ENCODE measurements at regions of chr1 and their contacts with region 1.

Region 1: GRCh38 chr1:210400043-210400840 is 71.5 kb downstream of the HHAT start:
- DNase-seq: peak in 4 of 5 donors; percentile 30 to 64 (median 48)
- ATAC-seq: peak; percentile 88 to 94 (median 91)
- H3K4me3 ChIP-seq: no peak overlapping the region
- H3K27ac ChIP-seq: no peak overlapping the region
- H3K4me1 ChIP-seq: peaks cover 0 to 11% (median 0%) of the 10 kb centered on the region in 12 donors
- H3K27me3 ChIP-seq: no peaks in the 10 kb centered on the region
- CTCF ChIP-seq: peak; percentile 68 to 90 (median 78)
- POLR2A ChIP-seq: no peak

Region 2: DNA sequence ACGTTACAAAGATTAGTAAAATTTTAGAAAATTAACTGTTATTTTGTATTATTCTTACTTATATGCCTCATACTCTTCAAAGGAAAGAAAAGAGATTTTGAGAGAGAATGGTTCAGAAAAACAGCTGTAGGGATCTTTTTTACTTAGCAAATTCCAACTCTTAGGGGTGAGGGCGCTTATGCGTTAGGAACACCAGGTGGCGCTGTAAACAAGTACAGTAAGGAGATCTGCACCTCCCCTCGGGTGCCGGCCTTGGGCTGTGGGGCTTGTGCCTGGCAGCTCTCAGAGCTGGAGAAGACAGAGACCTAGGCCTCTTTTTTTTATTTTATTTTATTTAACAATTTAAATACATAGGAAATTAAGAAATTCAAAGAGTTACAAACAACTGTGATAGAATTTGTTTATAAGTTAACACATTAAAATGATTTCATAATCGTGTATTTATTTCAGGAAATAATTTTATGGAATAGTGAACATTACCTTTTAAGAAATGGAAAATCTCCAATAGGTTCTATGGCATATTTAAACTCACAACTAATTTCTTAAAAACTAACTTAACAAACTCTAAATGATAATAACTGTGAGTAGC is 539.9 kb before region 1 on chr1:
- intact Hi-C with region 1: loop called in 1 of 10 experiments (anchors 10 kb)
- DNase-seq: peak; percentile 56 to 82 (median 73)
- ATAC-seq: peak; percentile 47 to 84 (median 76)
- H3K4me3 ChIP-seq: no peak overlapping the region
- H3K27ac ChIP-seq: no peak overlapping the region
- H3K4me1 ChIP-seq: no peaks in the 10 kb centered on the region
- H3K27me3 ChIP-seq: peaks cover 0 to 38% (median 10%) of the 10 kb centered on the region in 9 donors
- CTCF ChIP-seq: peak; percentile 79 to 93 (median 88)
- POLR2A ChIP-seq: no peak

Region 3: DNA sequence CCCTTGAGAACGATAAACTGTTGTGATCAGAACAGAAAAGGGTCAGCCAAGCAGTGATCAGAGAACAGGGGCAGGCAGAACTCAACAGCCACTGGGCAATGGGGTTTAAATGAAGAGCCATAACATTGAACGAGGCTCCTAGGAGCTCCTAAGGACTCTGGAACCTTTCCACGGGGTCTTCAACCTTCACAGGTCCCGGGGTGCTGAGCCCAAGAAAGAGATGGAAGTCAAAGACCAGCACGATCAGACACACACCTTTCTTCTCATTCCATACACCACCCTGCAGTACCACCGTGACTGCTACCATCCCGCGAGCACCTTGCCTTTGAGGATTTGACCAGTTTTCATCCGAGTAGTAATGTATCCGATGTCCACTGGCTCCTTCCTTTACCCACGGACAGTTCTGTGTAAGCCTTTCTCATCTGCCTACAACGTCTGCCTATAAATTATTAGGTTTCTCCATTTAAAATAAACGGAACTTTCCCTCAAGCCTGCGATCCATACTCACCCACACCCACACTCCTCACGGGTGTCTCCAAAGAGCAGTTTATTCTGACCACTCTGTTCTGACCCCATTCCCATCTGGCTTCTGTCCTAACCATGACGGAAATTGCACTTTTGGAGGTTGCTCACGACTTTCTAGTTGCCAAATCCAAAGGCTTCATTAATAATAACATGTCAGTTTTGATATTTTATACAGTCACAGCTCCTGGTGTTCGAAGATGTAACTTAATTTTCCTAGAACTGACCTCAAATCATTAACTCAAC is 88.3 kb before region 1 on chr1:
- intact Hi-C with region 1: loop called in 2 of 10 experiments (anchors 2 to 5 kb)
- DNase-seq: peak in 3 of 5 donors; percentile 43 to 52 (median 43)
- ATAC-seq: peak; percentile 55 to 83 (median 64)
- H3K4me3 ChIP-seq: peak overlapping the region in 10 of 12 donors; percentile 27 to 55 (median 42)
- H3K27ac ChIP-seq: peak overlapping the region; percentile 9 to 94 (median 70)
- H3K4me1 ChIP-seq: peaks cover 0 to 23% (median 6%) of the 10 kb centered on the region in 12 donors
- H3K27me3 ChIP-seq: peaks cover 0 to 3% (median 0%) of the 10 kb centered on the region in 9 donors
- CTCF ChIP-seq: no peak
- POLR2A ChIP-seq: no peak

Region 4: DNA sequence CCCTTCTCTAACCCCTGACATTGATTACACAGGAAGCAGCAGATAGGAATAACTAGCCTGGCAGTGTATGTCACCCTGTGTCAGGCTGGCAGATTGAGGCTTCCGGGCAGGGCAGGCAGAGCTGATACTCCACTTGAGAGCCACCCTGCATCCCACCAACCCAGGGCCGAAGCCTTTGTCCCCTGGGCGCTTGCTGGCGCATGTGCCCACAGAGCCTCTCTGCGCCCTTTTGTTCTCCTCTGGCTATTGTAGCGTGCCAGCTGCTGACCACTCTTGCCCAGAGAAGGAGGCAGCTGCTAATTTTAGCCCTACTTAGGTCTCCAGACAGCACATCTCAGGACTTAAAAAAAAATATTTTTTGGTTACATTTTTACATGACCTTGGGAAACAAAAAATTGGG is 233.4 kb after region 1 on chr1:
- intact Hi-C with region 1: no loop called
- DNase-seq: peak in 4 of 5 donors; percentile 26 to 62 (median 39)
- ATAC-seq: peak; percentile 62 to 91 (median 85)
- H3K4me3 ChIP-seq: no peak overlapping the region
- H3K27ac ChIP-seq: peak overlapping the region in 10 of 12 donors; percentile 33 to 80 (median 60)
- H3K4me1 ChIP-seq: peaks cover 0 to 29% (median 6%) of the 10 kb centered on the region in 12 donors
- H3K27me3 ChIP-seq: no peaks in the 10 kb centered on the region
- CTCF ChIP-seq: no peak
- POLR2A ChIP-seq: no peak

Region 5: DNA sequence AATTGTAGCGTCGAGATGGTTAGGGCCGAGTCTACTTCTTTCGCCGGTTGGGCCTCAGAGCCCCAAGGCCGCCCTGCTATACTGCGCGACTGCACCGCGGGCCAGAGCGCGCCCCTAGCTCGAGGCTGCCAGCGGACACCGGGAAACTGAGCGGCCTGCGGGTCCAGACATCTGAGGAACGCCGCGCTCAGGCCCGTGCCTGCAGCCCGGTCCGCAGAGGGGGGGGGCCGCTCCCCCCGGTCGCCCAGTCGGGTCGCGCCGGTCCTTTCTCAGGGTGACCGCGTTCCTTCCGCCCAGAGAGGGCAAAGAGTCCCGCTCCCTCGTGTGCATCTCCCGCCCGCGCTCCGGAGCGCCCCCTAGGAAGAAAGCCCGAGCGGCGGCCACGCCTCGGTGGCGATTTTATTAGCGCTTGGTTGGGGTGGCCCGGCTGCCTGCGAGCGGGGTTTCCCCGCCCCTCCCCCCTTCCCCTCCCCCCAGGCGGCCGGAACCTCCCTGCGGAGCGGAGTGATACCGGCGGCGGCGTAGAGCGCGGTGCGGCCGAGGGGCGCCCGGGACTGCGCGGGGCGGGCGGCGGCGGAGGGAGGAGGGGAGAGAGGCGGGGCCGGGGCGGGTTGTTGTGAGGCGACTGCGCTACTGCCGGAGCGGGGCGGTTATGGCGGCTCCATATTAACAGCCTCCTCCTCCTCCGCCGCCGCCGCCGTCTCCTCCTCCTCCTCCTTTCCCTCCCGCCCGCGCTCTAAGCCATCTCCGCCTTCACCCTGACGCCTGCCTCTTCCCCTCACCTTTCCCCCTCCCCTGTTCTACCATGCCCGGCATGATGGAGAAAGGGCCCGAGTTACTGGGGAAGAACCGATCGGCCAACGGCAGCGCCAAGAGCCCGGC is 858.8 kb after region 1 on chr1 and contains the start of gene RCOR3:
- intact Hi-C with region 1: loop called in 1 of 10 experiments (anchors 10 kb)
- DNase-seq: peak; percentile 96 to 98 (median 97)
- ATAC-seq: peak; percentile 83 to 94 (median 89)
- H3K4me3 ChIP-seq: peak within 1 kb of the TSS; percentile 70 to 98 (median 93)
- H3K27ac ChIP-seq: peak within 1 kb of the TSS; percentile 92 to 100 (median 98)
- H3K4me1 ChIP-seq: peaks cover 0 to 28% (median 16%) of the 10 kb centered on the region in 12 donors
- H3K27me3 ChIP-seq: no peaks in the 10 kb centered on the region
- CTCF ChIP-seq: peak; percentile 51 to 74 (median 62)
- POLR2A ChIP-seq: peak in 1 of 2 donors; percentile 69
- total RNA-seq, gene RCOR3: 28.9 to 60.1 (median 48.6) TPM

Region 6: DNA sequence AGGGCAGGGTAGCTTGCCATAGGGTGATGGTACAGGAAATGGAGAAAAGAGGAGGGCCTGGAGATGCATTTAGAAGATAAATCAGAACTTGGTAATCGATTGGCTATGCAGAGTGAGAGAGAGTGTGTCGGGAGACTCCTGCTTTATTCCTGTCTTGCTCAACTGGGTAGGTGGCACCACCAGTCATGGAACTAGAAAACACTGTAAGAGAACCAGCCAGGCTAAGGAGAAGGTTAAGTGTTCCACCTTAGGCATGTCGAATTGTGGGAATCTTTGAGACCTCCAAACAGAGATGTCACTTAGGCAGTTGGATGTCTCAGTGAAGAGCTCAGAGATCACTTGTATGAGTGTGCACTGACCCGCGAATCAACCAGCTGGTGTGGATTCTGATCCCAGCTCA is 1120.4 kb after region 1 on chr1:
- intact Hi-C with region 1: loop called in 1 of 10 experiments (anchors 5 kb)
- DNase-seq: no peak
- ATAC-seq: no peak
- H3K4me3 ChIP-seq: no peak overlapping the region
- H3K27ac ChIP-seq: no peak overlapping the region
- H3K4me1 ChIP-seq: peaks cover 0 to 4% (median 2%) of the 10 kb centered on the region in 12 donors
- H3K27me3 ChIP-seq: no peaks in the 10 kb centered on the region
- CTCF ChIP-seq: peak in 1 of 12 donors; percentile 9
- POLR2A ChIP-seq: no peak